GM12878 (cell line): ENCODE measurements at regions of chr6 and their contacts with region 1.

Region 1: DNA sequence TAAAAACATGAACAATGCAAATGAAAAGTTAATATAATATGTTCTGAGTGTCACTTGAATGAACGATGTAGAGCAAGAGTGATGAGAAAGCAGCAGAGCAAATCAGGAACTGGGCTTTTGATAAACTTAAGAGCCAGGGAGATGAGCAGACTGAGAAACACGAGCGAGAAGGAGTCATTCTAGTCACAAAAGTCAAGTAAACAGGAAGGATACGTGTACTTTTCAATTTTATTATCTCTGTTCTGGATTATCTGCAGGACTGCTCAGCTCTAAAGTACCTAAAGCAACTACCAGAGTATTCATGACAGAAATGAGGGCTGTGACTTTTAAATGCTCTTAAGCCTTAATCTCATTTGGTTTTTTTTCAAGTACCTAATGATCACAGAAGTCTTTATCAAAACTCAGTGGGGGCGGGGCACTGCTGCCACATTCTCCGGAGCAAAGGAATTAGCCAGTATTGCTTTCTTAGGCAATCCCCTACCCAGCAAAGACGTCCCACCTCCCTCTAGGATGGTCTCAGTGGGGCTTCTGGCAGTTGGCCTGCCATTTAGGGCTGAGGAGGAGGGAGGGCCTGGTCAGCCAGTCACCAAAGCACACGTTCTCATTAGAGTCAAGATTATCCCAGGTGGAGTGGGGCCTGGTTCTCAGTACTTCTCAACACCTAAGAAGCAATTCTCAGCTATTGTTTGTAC is 8.6 kb downstream of the MAN1A1 start:
- DNase-seq: no peak
- ATAC-seq: peak; percentile 8
- H3K4me3 ChIP-seq: 0 out of 2 replicates have a peak overlapping the region, but pooled peaks have one; percentile 14
- H3K27ac ChIP-seq: peak overlapping the region; percentile 10; the same call in 1 of the 2 replicates
- H3K4me1 ChIP-seq: peaks cover 10% of the 10 kb centered on the region
- H3K27me3 ChIP-seq: no peaks in the 10 kb centered on the region
- CTCF ChIP-seq: no peak
- EP300 ChIP-seq: no peak
- POLR2A ChIP-seq: no peak
- RAD21 ChIP-seq: no peak

Region 2: DNA sequence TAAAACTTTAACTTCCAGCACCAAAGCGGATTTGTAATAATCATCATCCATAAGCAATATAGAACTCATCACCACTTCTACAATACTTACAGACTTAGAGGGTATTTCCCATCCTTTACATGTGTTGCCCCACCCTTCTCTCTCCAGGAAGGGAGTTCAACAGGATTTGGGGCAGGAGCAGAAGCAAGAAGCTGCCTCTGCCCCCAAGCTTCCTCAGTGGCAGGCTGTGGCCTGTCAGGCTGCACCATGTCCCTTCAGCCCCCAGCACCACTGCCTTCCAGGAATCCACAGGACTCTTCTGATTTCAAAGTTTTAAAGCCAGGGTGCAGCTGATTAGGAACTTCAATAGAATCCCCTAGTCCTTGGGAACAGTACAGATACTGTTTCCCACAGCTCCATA is 369.3 kb before region 1 on chr6:
- CTCF ChIA-PET with region 1: no interaction called
- POLR2A ChIA-PET with region 1: no interaction called
- RAD21 ChIA-PET with region 1: no interaction called
- SMC1A ChIA-PET with region 1: no interaction called
- in situ Hi-C with region 1: no loop called
- intact Hi-C with region 1: no loop called
- DNase-seq: no peak
- ATAC-seq: no peak
- H3K4me3 ChIP-seq: no peak overlapping the region
- H3K27ac ChIP-seq: no peak overlapping the region
- H3K4me1 ChIP-seq: no peaks in the 10 kb centered on the region
- H3K27me3 ChIP-seq: no peaks in the 10 kb centered on the region
- CTCF ChIP-seq: no peak
- EP300 ChIP-seq: no peak
- POLR2A ChIP-seq: no peak
- RAD21 ChIP-seq: no peak

Region 3: GRCh38 chr6:119129148-119129967 is 211.6 kb before region 1 on chr6:
- CTCF ChIA-PET with region 1: interaction called, 10 read pairs
- POLR2A ChIA-PET with region 1: no interaction called
- RAD21 ChIA-PET with region 1: interaction called, 11 read pairs
- SMC1A ChIA-PET with region 1: interaction called, 11 read pairs
- in situ Hi-C with region 1: no loop called
- intact Hi-C with region 1: no loop called
- DNase-seq: no peak
- ATAC-seq: peak; percentile 95
- H3K4me3 ChIP-seq: no peak overlapping the region
- H3K27ac ChIP-seq: no peak overlapping the region
- H3K4me1 ChIP-seq: no peaks in the 10 kb centered on the region
- H3K27me3 ChIP-seq: no peaks in the 10 kb centered on the region; a peak in 1 of 4 replicates
- CTCF ChIP-seq: peak; percentile 72 to 81 (median 79)
- EP300 ChIP-seq: no peak
- POLR2A ChIP-seq: no peak
- RAD21 ChIP-seq: peak; percentile 87

Region 4: GRCh38 chr6:119328254-119328653 is 12.7 kb before region 1 on chr6:
- CTCF ChIA-PET with region 1: interaction called, 144 read pairs
- POLR2A ChIA-PET with region 1: interaction called, 52 read pairs
- RAD21 ChIA-PET with region 1: interaction called, 148 read pairs
- SMC1A ChIA-PET with region 1: interaction called, 168 read pairs
- in situ Hi-C with region 1: no loop called
- intact Hi-C with region 1: no loop called
- DNase-seq: no peak
- ATAC-seq: peak; percentile 27
- H3K4me3 ChIP-seq: no peak overlapping the region
- H3K27ac ChIP-seq: no peak overlapping the region
- H3K4me1 ChIP-seq: no peaks in the 10 kb centered on the region
- H3K27me3 ChIP-seq: no peaks in the 10 kb centered on the region
- CTCF ChIP-seq: no peak
- EP300 ChIP-seq: no peak
- POLR2A ChIP-seq: no peak
- RAD21 ChIP-seq: no peak